GM12878 (cell line): ENCODE measurements at regions of chr12 and their contacts with region 1.

Region 1: DNA sequence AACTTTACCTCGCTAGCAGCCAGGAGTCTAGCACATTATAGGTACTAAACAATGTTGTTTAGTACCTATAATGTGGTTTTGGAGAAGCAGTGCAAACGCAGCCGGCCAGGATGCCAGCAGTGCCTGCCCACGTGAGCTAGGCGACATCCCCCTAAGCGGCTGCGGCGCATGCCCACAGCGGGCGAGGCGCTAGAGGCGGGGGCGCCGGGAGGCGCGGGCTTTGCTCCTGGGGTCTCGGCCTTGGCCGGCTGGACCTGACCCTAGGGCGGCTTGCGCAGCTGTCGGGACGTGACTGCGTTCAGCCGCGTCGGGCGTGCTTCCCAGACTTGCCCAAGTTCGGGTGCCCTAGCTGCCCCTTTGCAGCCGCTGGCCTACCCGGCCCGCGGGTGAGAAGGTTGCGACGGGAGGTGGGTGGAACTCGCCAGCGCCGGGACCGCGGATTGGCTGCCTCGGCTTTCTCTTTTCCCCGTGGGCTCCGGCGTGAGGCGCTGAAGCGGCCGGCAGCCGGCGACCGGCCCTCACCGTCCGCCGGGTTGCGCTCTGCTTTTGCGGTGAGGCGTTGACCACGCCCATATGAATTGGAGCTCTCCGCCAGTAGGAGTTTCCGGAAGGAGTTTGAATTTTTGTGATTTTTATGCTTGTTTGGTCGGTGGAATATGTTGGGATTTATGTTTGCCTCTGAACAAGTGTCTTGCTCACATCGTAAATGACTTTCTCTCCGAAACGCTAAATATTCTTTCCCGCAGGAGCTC is at the start of gene TMEM19:
- DNase-seq: peak; percentile 65
- ATAC-seq: peak; percentile 94
- H3K4me3 ChIP-seq: peak within 1 kb of the TSS; percentile 70
- H3K27ac ChIP-seq: peak within 1 kb of the TSS; percentile 77
- H3K4me1 ChIP-seq: peaks cover 14% of the 10 kb centered on the region
- H3K27me3 ChIP-seq: no peaks in the 10 kb centered on the region
- CTCF ChIP-seq: peak; percentile 25 to 60 (median 33); a peak in 4 of 6 replicates
- EP300 ChIP-seq: no peak
- POLR2A ChIP-seq: peak; percentile 86
- RAD21 ChIP-seq: peak; percentile 44
- polyA plus RNA-seq, gene TMEM19: 32.2 to 54.9 TPM

Region 2: DNA sequence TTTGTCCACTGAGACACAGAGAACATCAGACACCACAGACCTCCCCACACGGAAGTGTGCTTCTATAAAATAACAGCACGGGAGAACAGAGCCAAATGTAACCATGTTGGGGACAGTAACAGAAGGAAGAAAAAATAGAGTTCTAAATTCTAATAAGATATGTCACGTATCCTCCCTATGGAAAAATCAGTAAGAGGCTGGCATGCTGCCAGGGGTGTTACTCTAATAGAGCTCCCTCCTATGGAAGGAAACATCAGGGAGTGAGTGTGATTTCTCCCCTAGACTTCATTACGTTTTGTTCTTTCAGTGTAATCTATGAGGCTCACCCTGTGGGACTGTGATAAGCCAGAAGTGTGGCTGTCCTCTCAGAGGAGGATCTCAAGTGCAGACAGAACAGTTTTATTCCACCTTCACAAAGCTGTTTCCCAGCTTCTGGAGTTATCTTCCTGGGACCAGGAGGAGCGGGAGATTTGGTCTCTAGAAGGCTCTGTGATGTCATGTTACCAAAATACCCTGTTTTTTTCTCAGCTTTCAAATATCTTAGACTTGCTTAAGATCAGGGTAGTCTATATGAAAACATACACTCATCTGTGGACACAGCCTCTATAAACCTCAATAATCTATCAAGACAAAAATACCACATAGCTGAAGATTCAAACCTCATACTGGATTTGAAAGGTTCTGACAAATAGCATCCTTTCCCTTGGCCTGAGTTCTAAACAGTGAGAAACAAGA is 91.7 kb before region 1 on chr12:
- CTCF ChIA-PET with region 1: no interaction called
- POLR2A ChIA-PET with region 1: no interaction called
- RAD21 ChIA-PET with region 1: no interaction called
- SMC1A ChIA-PET with region 1: no interaction called
- in situ Hi-C with region 1: no loop called
- intact Hi-C with region 1: no loop called
- DNase-seq: no peak
- ATAC-seq: no peak
- H3K4me3 ChIP-seq: no peak overlapping the region
- H3K27ac ChIP-seq: no peak overlapping the region
- H3K4me1 ChIP-seq: no peaks in the 10 kb centered on the region
- H3K27me3 ChIP-seq: no peaks in the 10 kb centered on the region; a peak in 1 of 4 replicates
- CTCF ChIP-seq: no peak
- EP300 ChIP-seq: no peak
- POLR2A ChIP-seq: no peak
- RAD21 ChIP-seq: no peak

Region 3: GRCh38 chr12:71663561-71664294 is 22.4 kb before region 1 on chr12 and contains the start of gene ZFC3H1:
- CTCF ChIA-PET with region 1: interaction called, 83 read pairs
- POLR2A ChIA-PET with region 1: interaction called, 93 read pairs
- RAD21 ChIA-PET with region 1: interaction called, 59 read pairs
- SMC1A ChIA-PET with region 1: interaction called, 48 read pairs
- in situ Hi-C with region 1: no loop called
- intact Hi-C with region 1: loop called (anchors 1 kb)
- DNase-seq: peak; percentile 99
- ATAC-seq: peak; percentile 89
- H3K4me3 ChIP-seq: peak within 1 kb of the TSS; percentile 99
- H3K27ac ChIP-seq: peak within 1 kb of the TSS; percentile 85
- H3K4me1 ChIP-seq: 0 out of 2 replicates have a peak, but pooled peaks cover 6% of the 10 kb centered on the region
- H3K27me3 ChIP-seq: no peaks in the 10 kb centered on the region
- CTCF ChIP-seq: peak; percentile 26 to 43 (median 30); a peak in 4 of 6 replicates
- EP300 ChIP-seq: no peak
- POLR2A ChIP-seq: peak; percentile 85
- RAD21 ChIP-seq: no peak
- polyA plus RNA-seq, gene ZFC3H1: 11.2 to 14.6 TPM

Region 4: GRCh38 chr12:71702590-71702989 is 16.5 kb after region 1 on chr12:
- CTCF ChIA-PET with region 1: interaction called, 5 read pairs
- POLR2A ChIA-PET with region 1: no interaction called
- RAD21 ChIA-PET with region 1: no interaction called
- SMC1A ChIA-PET with region 1: interaction called, 10 read pairs
- in situ Hi-C with region 1: no loop called
- intact Hi-C with region 1: no loop called
- DNase-seq: no peak
- ATAC-seq: no peak
- H3K4me3 ChIP-seq: no peak overlapping the region
- H3K27ac ChIP-seq: no peak overlapping the region
- H3K4me1 ChIP-seq: no peaks in the 10 kb centered on the region
- H3K27me3 ChIP-seq: no peaks in the 10 kb centered on the region
- CTCF ChIP-seq: no peak
- EP300 ChIP-seq: no peak
- POLR2A ChIP-seq: no peak
- RAD21 ChIP-seq: no peak

Region 5: DNA sequence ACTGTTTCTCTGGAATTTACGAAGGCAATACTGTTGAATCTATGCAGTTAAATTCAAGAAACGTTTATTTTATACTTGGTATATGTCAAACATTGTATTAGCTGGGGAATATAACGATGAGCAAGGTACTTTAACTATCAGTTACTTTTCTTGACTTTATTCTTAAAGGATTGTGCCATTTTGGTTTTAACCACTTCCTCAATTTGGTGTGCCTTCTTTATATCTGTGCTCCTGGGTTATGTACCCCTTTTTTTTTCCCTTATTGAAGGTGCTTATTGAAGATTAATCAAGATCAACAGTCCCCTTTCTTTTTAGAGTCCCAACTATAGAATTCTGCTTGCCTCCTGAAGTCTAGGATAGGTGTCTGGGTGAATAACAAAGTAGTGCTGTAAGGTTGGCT is 74.4 kb after region 1 on chr12:
- CTCF ChIA-PET with region 1: interaction called, 4 read pairs
- POLR2A ChIA-PET with region 1: interaction called, 22 read pairs
- RAD21 ChIA-PET with region 1: interaction called, 10 read pairs
- SMC1A ChIA-PET with region 1: interaction called, 3 read pairs
- in situ Hi-C with region 1: no loop called
- intact Hi-C with region 1: loop called (anchors 2 kb)
- DNase-seq: no peak
- ATAC-seq: no peak; the same call in 2 of the 3 replicates
- H3K4me3 ChIP-seq: no peak overlapping the region
- H3K27ac ChIP-seq: no peak overlapping the region
- H3K4me1 ChIP-seq: no peaks in the 10 kb centered on the region
- H3K27me3 ChIP-seq: no peaks in the 10 kb centered on the region
- CTCF ChIP-seq: no peak
- EP300 ChIP-seq: no peak
- POLR2A ChIP-seq: no peak
- RAD21 ChIP-seq: no peak

Region 6: DNA sequence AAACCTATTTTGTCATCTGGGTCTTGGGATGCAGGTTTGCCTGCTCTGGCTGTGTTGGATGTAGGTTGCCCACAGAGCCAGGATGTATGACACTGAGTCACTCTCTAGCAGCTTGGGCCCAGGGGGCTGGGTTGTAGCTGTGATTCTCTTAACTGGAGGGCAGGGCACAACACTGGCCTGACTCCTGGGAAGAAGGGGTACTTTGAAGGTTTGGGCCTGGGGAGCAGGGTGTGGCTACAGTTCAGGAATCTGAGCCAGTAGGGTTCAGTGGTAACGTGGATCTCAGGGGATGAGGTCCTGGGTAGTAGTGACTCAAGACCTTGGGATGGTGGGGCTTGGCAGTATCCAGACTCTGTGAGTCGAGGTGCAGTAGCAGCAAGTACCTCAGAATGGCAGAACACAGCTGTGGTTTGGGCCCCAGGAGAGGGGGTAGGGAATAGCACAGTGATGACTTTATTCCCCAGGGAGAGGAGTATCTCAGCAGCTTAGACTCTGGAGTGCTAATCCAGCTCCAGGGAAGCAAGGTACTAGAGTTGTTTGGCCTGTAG is 179.2 kb after region 1 on chr12:
- CTCF ChIA-PET with region 1: no interaction called
- POLR2A ChIA-PET with region 1: no interaction called
- RAD21 ChIA-PET with region 1: no interaction called
- SMC1A ChIA-PET with region 1: no interaction called
- in situ Hi-C with region 1: no loop called
- intact Hi-C with region 1: no loop called
- DNase-seq: no peak
- ATAC-seq: peak; percentile 8; the same call in 1 of the 3 replicates
- H3K4me3 ChIP-seq: no peak overlapping the region
- H3K27ac ChIP-seq: no peak overlapping the region
- H3K4me1 ChIP-seq: peaks cover 13% of the 10 kb centered on the region
- H3K27me3 ChIP-seq: no peaks in the 10 kb centered on the region
- CTCF ChIP-seq: no peak
- EP300 ChIP-seq: no peak
- POLR2A ChIP-seq: no peak
- RAD21 ChIP-seq: no peak